Endothelial cell of umbilical vein (primary cell): ENCODE measurements at regions of chr2 and their contacts with region 1.

Region 1: DNA sequence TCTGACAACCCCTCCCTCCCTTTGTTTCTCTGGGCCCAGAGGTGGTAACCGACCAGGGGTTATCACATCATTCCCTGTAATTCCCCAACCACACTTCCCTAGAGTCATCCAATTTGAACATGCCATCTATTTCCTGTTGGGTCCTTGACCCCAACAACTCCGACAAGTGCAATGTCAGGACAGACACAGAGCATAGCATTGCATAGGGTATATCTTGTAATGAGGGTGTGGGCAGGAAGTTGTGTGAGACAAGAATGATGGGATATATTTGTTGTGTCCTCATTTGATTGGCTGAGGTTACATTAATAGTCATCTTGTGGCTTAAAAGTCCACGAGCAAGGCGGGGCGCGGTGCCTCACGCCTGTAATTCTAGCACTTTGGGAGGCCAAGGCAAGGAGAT is 33.4 kb upstream of the CNOT11 start:
- DNase-seq: no peak
- H3K4me3 ChIP-seq: no peak overlapping the region
- H3K27ac ChIP-seq: no peak overlapping the region
- H3K4me1 ChIP-seq: no peaks in the 10 kb centered on the region
- H3K27me3 ChIP-seq: peaks cover 0 to 2% of the 10 kb centered on the region in 2 experiments
- CTCF ChIP-seq: no peak
- POLR2A ChIP-seq: no peak

Region 2: GRCh38 chr2:100610381-100610831 is 608.8 kb before region 1 on chr2:
- CTCF ChIA-PET with region 1: interaction called, 14 read pairs
- POLR2A ChIA-PET with region 1: no interaction called
- dilution Hi-C with region 1: no loop called
- intact Hi-C with region 1: no loop called
- DNase-seq: peak; percentile 60
- H3K4me3 ChIP-seq: no peak overlapping the region
- H3K27ac ChIP-seq: no peak overlapping the region
- H3K4me1 ChIP-seq: no peaks in the 10 kb centered on the region
- H3K27me3 ChIP-seq: no peaks in the 10 kb centered on the region
- CTCF ChIP-seq: peak; percentile 64 to 88
- POLR2A ChIP-seq: no peak

Region 3: DNA sequence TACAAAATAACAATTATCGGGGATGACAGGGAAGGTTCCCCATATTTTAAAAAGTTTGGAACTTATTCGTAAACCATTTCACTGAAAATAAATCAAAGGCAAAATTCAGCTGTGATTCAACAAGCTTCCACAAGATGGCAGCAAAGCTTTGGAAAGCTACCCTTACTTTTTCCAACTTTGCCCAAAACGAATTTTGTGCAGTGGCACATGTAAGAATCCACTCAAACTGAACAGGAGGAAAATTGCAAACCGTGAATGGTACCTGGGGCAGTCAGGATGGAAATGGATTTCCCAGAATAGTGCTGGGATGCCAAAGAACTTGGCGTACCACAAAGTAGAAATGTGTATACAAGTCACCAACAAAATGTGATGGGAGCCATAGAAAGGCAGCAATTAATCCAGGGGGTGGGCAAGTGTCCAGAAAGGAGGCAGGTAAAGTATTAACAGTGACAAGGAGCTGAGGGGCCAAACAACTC is 206.5 kb before region 1 on chr2:
- CTCF ChIA-PET with region 1: interaction called, 13 read pairs
- POLR2A ChIA-PET with region 1: no interaction called
- dilution Hi-C with region 1: no loop called
- intact Hi-C with region 1: no loop called
- DNase-seq: peak; percentile 56
- H3K4me3 ChIP-seq: no peak overlapping the region
- H3K27ac ChIP-seq: no peak overlapping the region
- H3K4me1 ChIP-seq: no peaks in the 10 kb centered on the region
- H3K27me3 ChIP-seq: no peaks in the 10 kb centered on the region
- CTCF ChIP-seq: peak; percentile 57 to 72
- POLR2A ChIP-seq: no peak

Region 4: GRCh38 chr2:101036562-101037457 is 182.4 kb before region 1 on chr2:
- CTCF ChIA-PET with region 1: interaction called, 22 read pairs
- POLR2A ChIA-PET with region 1: no interaction called
- dilution Hi-C with region 1: loop called (anchors 25 kb)
- intact Hi-C with region 1: no loop called
- DNase-seq: peak; percentile 53
- H3K4me3 ChIP-seq: no peak overlapping the region
- H3K27ac ChIP-seq: no peak overlapping the region
- H3K4me1 ChIP-seq: no peaks in the 10 kb centered on the region
- H3K27me3 ChIP-seq: no peaks in the 10 kb centered on the region
- CTCF ChIP-seq: peak; percentile 24 to 40
- POLR2A ChIP-seq: no peak

Region 5: DNA sequence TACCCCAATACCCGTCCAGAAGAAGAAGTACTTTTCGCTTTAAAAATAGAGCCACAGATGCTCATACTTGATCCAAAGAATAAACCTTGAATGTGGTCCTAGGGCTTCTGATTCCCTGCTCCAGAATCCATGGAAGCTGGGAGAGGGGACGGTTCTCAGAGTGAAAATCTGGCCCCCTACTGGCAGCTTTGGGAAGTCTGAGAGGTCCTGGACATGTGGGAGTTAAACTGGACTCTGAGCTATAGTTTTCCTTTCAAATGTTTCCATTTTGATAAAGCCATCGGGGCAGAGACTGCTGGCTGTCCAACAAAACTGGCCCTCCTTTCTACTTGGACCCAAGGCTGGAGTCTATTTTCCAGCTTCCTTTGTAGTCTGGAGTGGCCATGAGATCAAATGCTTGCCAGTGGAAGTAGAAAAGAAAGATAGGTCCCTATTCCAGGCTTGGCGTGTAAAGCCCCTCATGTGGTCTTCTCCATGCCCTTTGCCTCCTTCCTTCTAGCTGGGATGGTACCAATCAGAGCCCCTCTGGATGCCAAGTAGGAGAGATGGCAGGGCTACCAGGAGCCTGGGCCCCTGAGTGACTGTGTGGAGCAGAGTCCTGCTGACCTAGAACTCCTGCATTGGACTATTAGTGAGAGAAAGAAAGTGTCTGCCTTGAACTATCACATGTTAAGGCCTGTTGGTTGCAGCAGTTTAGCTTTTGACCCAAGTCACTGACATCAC is 30.4 kb before region 1 on chr2:
- CTCF ChIA-PET with region 1: interaction called, 12 read pairs
- POLR2A ChIA-PET with region 1: no interaction called
- dilution Hi-C with region 1: no loop called
- intact Hi-C with region 1: no loop called
- DNase-seq: peak; percentile 41
- H3K4me3 ChIP-seq: no peak overlapping the region
- H3K27ac ChIP-seq: no peak overlapping the region
- H3K4me1 ChIP-seq: no peaks in the 10 kb centered on the region
- H3K27me3 ChIP-seq: peaks cover 0 to 2% of the 10 kb centered on the region in 2 experiments
- CTCF ChIP-seq: peak; percentile 74 to 78
- POLR2A ChIP-seq: no peak

Region 6: DNA sequence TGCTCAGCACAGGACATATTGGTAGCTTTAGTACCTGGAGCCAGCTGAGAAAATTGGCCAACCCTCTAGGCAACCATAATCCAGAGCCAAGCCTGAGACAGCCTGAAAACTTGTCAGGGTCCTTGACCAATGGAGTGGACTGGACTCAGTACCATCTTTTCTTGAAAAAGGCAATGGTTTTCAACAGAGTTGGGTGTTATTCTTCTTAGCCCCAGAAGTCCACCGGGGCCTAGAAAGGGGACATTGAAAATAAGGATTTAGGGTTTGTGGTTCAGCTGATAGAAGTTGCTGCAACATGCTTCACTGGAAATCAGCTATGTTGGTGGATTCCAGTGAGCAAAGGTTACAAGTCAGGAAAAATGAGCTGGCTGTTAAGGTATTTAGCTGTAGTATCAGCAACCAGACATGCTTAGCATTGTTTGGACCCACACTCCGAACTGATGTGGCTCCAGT is 11.3 kb after region 1 on chr2:
- CTCF ChIA-PET with region 1: interaction called, 13 read pairs
- POLR2A ChIA-PET with region 1: no interaction called
- dilution Hi-C with region 1: no loop called
- intact Hi-C with region 1: no loop called
- DNase-seq: no peak
- H3K4me3 ChIP-seq: no peak overlapping the region
- H3K27ac ChIP-seq: no peak overlapping the region
- H3K4me1 ChIP-seq: no peaks in the 10 kb centered on the region
- H3K27me3 ChIP-seq: no peaks in the 10 kb centered on the region
- CTCF ChIP-seq: no peak
- POLR2A ChIP-seq: no peak